ENCODE measurements at regions of chr2 and their contacts with region 1.

Region 1: DNA sequence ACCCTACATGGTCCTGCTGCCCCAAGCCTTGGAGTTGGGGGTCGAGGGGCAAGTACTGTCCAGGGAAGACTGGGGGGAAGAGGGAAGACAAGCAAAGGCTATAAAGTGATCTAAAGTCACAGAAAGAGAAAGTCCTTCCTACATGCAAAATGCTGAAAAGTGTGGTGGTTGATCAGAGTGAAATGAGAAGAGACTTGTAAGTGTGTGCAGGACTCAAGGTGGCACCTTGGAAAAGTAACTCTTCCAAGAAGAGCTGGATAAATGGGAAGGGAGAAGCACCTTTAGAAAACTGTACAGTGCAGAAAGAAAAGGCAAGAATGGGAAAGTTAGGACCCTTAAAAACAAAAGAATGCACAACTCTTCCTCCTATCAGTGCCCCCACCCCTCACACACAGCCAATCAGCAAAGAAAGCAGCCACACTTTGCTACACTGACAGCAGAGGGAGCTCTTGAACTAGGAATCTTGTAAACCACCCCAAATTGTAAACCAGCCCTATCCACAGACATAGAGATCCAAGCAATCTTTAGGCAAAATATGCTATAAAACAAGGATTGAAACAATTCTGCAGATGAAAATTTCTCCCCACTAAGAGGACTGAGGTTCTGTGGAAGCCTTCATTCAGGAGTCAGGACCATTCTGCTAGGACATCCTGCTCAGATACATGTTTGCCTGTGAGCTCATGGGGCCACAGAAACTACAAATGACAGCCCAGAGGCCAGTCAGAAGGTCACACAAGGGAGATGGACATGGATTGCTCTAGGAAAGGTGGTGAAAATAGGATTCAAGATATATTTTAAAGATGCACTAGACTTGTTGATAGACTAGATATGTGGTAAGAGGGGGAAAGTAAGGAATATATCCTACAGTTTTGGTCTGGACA is 146.4 kb downstream of the FTCDNL1 start:
- H3K4me3 ChIP-seq: no peak overlapping the region
- H3K27ac ChIP-seq: no peak overlapping the region
- H3K4me1 ChIP-seq: no peaks in the 10 kb centered on the region
- CTCF ChIP-seq: peak; percentile 90

Region 2: DNA sequence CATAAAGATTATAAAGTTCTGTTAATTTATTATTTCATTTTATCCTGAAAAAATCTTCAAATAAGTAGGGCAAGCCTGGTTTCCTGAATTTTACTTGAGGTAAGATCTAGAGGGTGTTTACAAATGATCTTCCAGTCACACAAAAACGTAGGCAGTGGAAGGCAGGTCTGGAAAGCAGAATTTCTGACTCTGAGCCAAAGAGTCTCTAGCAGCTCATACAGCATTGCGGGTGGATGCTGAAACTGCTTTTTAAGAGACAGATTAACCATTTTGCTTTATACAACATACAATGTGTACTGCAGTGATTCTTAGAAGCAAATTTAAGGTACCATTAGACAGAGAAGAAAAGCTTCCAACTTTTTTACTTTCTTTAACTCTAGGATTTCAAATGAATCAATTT is 29.4 kb after region 1 on chr2:
- CTCF ChIA-PET with region 1: interaction called, 68 read pairs
- POLR2A ChIA-PET with region 1: no interaction called
- H3K4me3 ChIP-seq: no peak overlapping the region
- H3K27ac ChIP-seq: no peak overlapping the region
- H3K4me1 ChIP-seq: peaks cover 6% of the 10 kb centered on the region
- CTCF ChIP-seq: no peak

Region 3: DNA sequence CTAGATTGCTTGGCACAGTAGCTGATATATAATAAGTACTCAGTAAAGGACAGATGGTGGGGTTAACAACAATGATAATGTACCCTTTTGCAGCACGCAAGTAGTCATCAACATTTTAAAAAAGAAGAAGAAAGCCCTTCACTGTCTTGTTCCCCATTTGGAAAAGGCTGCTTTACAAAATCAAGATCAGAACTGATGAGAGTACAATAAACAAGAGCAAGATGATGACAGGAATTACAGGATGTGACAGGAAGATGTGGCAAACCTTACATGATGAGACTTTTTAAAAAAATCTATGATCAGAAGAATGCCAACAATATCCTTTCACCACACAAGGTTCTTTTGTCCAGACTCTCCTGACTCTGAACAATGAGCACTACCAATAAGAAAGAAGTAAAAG is 241.6 kb after region 1 on chr2:
- CTCF ChIA-PET with region 1: no interaction called
- POLR2A ChIA-PET with region 1: no interaction called
- H3K4me3 ChIP-seq: no peak overlapping the region
- H3K27ac ChIP-seq: no peak overlapping the region
- H3K4me1 ChIP-seq: no peaks in the 10 kb centered on the region
- CTCF ChIP-seq: no peak

Measured in HEK293 (cell line).